Esophagus squamous epithelium (tissue), 5 donors: ENCODE measurements at regions of chr5 and their contacts with region 1.

Region 1: DNA sequence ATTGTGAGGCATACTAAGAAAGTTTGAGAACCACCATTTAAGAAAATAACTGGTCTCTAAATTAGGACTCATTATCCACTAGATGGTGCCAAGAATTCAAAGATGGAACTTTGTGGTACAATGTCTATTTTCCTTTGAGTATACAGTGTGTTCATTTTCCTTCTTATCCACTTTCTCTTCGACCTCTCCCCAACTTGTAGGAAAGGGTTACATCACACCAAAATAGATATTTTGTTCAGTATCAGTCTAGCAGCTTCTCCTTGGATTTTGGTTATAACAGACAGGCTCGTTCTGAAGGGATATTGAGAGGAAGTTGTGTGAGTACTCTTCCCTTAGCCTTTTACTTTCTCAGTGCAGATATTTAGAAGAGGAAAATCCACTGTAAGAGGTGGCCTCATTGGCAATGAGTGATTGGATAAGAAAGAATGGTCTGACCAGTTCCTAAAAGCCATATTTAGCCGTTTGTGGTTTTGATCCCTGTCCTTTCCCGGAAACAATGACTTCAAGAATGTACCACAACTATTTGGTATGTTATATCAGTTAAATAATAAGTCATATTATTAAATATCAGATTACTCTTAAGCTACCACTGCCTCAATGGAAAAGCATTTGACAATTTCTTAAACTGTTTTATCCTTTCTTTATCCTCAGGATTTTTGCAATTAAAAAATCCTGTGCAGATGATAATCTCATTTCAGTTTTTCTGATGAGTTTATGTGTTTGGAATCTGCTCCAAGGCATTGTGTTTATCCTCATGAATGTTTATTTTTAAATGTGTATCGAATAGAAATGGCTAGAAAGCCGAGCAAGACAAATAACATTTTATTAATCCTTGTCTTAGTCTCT is 69.0 kb upstream of the GRAMD2B start:
- DNase-seq: no peak
- H3K4me3 ChIP-seq: peak overlapping the region in 1 of 4 donors; percentile 48
- H3K27ac ChIP-seq: peak overlapping the region in 3 of 4 donors; percentile 56 to 74 (median 63)
- H3K4me1 ChIP-seq: peaks cover 3 to 13% (median 8%) of the 10 kb centered on the region in 3 donors
- H3K27me3 ChIP-seq: no peaks in the 10 kb centered on the region
- CTCF ChIP-seq: peak; percentile 45 to 69 (median 50)
- POLR2A ChIP-seq: no peak

Region 2: GRCh38 chr5:126395198-126395597 is 41.0 kb after region 1 on chr5:
- intact Hi-C with region 1: no loop called
- DNase-seq: no peak
- H3K4me3 ChIP-seq: no peak overlapping the region
- H3K27ac ChIP-seq: peak overlapping the region in 1 of 4 donors; percentile 20
- H3K4me1 ChIP-seq: peaks cover 0 to 14% (median 0%) of the 10 kb centered on the region in 3 donors
- H3K27me3 ChIP-seq: no peaks in the 10 kb centered on the region
- CTCF ChIP-seq: no peak
- POLR2A ChIP-seq: no peak

Region 3: GRCh38 chr5:126422989-126423788 is 69.0 kb after region 1 on chr5 and contains the start of gene GRAMD2B:
- intact Hi-C with region 1: no loop called
- DNase-seq: peak; percentile 37
- H3K4me3 ChIP-seq: peak within 1 kb of the TSS; percentile 56 to 83 (median 66)
- H3K27ac ChIP-seq: peak within 1 kb of the TSS; percentile 90 to 94 (median 92)
- H3K4me1 ChIP-seq: peaks cover 0 to 45% (median 7%) of the 10 kb centered on the region in 3 donors
- H3K27me3 ChIP-seq: no peaks in the 10 kb centered on the region
- CTCF ChIP-seq: no peak
- POLR2A ChIP-seq: peak in 3 of 4 donors; percentile 62 to 92 (median 85)
- total RNA-seq, gene GRAMD2B: 10.2 to 29.0 (median 15.8) TPM

Region 4: GRCh38 chr5:126536874-126537273 is 182.6 kb after region 1 on chr5:
- intact Hi-C with region 1: loop called (anchors 5 kb)
- DNase-seq: no peak
- H3K4me3 ChIP-seq: no peak overlapping the region
- H3K27ac ChIP-seq: peak overlapping the region in 3 of 4 donors; percentile 29 to 43 (median 40)
- H3K4me1 ChIP-seq: peaks cover 0 to 22% (median 17%) of the 10 kb centered on the region in 3 donors
- H3K27me3 ChIP-seq: no peaks in the 10 kb centered on the region
- CTCF ChIP-seq: peak in 3 of 6 experiments; percentile 12 to 41 (median 18)
- POLR2A ChIP-seq: no peak